Activated CD4-positive, alpha-beta T cell treated with anti-CD3 and anti-CD28 coated beads for 36 hours (primary cell): ENCODE measurements at regions of chr20 and their contacts with region 1.

Region 1: DNA sequence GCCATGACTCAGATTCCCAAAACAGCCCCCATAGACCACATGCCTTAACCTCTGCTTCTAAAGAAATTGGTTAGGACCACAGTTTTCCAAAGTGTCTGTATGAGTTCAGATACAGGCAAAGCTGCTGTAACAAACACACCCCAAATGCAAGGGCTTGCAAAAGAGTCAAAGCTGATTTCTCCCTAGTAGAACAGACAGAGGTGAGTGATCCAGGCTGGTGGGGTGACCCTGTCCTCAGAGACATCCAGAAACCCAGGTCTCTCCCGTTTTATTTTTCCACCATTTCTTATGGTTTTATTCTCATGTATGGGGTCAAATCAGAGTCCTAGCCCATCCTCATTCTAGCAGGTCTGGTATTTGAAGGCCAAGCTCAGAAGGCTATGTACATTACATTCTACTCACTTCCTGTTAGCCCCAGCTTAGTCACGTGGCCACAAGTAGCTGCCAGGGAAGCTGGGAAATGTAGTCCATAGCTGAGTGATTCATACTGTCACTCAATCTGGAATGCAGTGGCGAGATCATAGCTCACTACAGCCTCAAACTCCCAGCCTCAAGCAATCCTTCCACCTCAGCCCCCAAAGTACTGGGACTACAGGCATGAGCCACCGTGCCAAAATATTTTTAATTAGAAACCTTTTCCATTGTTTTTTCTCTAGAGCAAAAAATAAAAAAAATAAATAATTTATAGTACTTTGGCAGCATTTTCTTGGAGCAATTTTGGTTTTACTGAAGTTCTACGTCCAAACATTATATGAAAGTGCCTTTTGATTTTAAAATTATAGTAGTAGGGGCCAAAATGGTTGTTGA is 175.2 kb downstream of the ZMYND8 start:
- DNase-seq: peak; percentile 52
- ATAC-seq: peak; percentile 93
- H3K4me3 Mint-ChIP-seq: no peak overlapping the region
- H3K27ac Mint-ChIP-seq: no peak overlapping the region
- H3K4me1 Mint-ChIP-seq: no peaks in the 10 kb centered on the region
- H3K27me3 Mint-ChIP-seq: no peaks in the 10 kb centered on the region

Region 2: GRCh38 chr20:45727044-45727443 is 1454.2 kb before region 1 on chr20:
- CTCF ChIA-PET with region 1: no interaction called
- POLR2A ChIA-PET with region 1: no interaction called
- intact Hi-C with region 1: no loop called
- DNase-seq: no peak
- ATAC-seq: peak; percentile 49
- H3K4me3 Mint-ChIP-seq: no peak overlapping the region
- H3K27ac Mint-ChIP-seq: no peak overlapping the region
- H3K4me1 Mint-ChIP-seq: peaks cover 5% of the 10 kb centered on the region
- H3K27me3 Mint-ChIP-seq: peaks cover 42% of the 10 kb centered on the region

Region 3: GRCh38 chr20:47150403-47151152 is 30.7 kb before region 1 on chr20:
- CTCF ChIA-PET with region 1: no interaction called
- POLR2A ChIA-PET with region 1: no interaction called
- intact Hi-C with region 1: loop called in 1 of 2 experiments (anchors 1 kb)
- DNase-seq: peak; percentile 47
- ATAC-seq: peak; percentile 95
- H3K4me3 Mint-ChIP-seq: no peak overlapping the region
- H3K27ac Mint-ChIP-seq: no peak overlapping the region
- H3K4me1 Mint-ChIP-seq: no peaks in the 10 kb centered on the region
- H3K27me3 Mint-ChIP-seq: peaks cover 8% of the 10 kb centered on the region

Region 4: GRCh38 chr20:47620808-47621805 is 439.8 kb after region 1 on chr20:
- CTCF ChIA-PET with region 1: no interaction called
- POLR2A ChIA-PET with region 1: no interaction called
- intact Hi-C with region 1: no loop called
- DNase-seq: no peak
- ATAC-seq: peak; percentile 61
- H3K4me3 Mint-ChIP-seq: no peak overlapping the region
- H3K27ac Mint-ChIP-seq: peak overlapping the region; percentile 79
- H3K4me1 Mint-ChIP-seq: peaks cover 33% of the 10 kb centered on the region
- H3K27me3 Mint-ChIP-seq: no peaks in the 10 kb centered on the region